ENCODE measurements at regions of chr1 and their contacts with region 1.

Region 1: DNA sequence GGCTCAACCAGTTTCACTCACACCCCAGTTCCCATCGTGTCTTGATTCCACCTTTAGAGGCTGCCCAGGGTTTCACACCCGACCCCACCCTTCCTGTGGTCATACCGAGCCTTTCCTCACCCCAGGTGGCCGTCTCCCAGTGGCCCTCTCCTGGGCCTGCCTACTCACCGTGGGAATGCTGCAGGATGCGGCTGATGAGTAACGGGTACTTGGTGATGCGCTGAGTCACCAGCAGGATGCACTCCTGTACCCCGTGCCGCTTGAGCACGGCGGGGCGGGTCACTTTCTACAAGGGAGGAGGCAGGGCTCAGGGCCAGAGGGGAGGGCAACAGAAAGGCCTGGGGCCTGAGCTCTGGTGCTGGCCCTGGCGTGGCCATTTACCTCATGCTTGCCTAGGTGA is 16.4 kb downstream of the ARHGEF2 start:
- H3K4me3 ChIP-seq: no peak overlapping the region
- H3K27ac ChIP-seq: no peak overlapping the region
- H3K4me1 ChIP-seq: no peaks in the 10 kb centered on the region
- CTCF ChIP-seq: no peak

Region 2: GRCh38 chr1:155978325-155978972 is 16.5 kb after region 1 on chr1 and contains the start of gene ARHGEF2:
- CTCF ChIA-PET with region 1: interaction called, 10 read pairs
- POLR2A ChIA-PET with region 1: interaction called, 11 read pairs
- H3K4me3 ChIP-seq: peak within 1 kb of the TSS; percentile 91
- H3K27ac ChIP-seq: peak within 1 kb of the TSS; percentile 97
- H3K4me1 ChIP-seq: peaks cover 36% of the 10 kb centered on the region
- CTCF ChIP-seq: peak; percentile 68; the same call in 1 of the 2 replicates